ENCODE measurements at regions of chr1 and their contacts with region 1.

Region 1: DNA sequence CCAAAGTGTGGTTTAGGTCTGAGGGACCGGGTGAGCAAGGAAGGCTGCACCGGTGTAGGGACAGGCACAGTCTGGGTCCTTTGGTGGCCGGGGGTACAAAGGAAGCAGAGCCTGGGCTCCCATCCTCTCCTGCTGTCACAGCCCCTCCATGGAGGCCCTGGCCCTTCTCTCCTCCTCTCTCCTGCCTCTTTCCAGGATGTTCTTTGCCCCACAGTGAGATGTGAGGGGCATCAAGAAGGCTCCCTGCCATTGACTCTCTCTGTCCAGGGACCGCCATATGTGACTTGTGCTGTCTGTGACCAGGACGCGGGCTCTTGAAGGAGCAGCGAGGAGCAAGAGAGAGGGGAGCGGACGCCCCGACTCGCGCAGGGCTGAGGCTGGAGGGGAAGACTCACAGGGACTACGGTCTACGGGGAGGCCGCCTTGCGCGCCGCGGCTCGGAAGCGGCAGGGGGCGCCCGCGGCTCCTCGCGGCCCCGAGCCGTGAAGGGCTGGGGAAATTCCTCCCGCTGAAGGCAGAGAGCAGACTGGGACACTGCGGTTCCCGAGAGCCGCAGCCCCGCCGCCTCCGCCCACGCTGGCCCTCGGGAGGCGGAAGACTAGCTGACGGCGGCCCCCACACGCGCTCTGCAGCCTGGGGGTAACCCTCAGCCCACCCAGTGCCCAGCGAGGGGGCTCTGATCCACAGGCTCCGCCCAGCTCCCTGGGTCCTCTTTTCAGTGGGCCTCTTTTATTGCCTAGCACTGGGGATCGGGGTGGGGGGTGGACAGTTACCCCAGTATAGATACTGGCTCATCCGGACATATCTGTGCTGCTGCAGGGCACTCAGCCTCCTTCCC is 40.8 kb downstream of the MAB21L3 start:
- DNase-seq: peak; percentile 84
- ATAC-seq: peak; percentile 100
- H3K4me3 ChIP-seq: peak overlapping the region; percentile 78
- H3K27ac ChIP-seq: no peak overlapping the region
- H3K4me1 ChIP-seq: peaks cover 3% of the 10 kb centered on the region; the same call in 1 of the 2 replicates
- H3K27me3 ChIP-seq: no peaks in the 10 kb centered on the region
- CTCF ChIP-seq: peak; percentile 81

Region 2: DNA sequence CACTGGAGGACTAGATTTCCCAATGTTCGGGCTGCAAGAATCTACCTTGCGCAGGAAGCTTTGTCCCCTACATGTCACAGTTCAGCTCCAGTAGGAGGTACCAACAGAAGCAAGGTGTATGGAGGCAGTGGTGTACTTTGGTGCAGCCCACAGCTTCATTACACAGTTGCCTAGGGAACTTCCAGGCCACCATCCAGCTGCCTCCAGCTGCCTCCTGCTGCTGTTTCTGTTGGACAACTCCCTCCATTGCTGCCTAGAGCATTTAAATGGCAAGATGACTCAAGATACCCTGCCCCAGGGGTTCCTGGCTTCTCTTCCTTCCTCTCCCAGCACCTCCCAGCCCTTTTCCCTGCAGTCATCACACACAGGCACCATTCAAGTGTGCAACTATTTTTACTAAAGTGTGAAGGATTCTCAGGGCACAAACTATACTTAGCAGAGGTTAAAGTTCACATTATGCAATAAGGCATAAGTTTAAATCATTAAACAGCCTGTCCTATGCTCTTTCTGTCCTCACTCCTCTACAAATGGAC is 182.1 kb after region 1 on chr1:
- CTCF ChIA-PET with region 1: no interaction called
- POLR2A ChIA-PET with region 1: no interaction called
- intact Hi-C with region 1: loop called (anchors 10 kb)
- DNase-seq: peak; percentile 80
- ATAC-seq: peak; percentile 43
- H3K4me3 ChIP-seq: no peak overlapping the region
- H3K27ac ChIP-seq: no peak overlapping the region
- H3K4me1 ChIP-seq: peaks cover 40% of the 10 kb centered on the region
- H3K27me3 ChIP-seq: no peaks in the 10 kb centered on the region
- CTCF ChIP-seq: no peak

Region 3: DNA sequence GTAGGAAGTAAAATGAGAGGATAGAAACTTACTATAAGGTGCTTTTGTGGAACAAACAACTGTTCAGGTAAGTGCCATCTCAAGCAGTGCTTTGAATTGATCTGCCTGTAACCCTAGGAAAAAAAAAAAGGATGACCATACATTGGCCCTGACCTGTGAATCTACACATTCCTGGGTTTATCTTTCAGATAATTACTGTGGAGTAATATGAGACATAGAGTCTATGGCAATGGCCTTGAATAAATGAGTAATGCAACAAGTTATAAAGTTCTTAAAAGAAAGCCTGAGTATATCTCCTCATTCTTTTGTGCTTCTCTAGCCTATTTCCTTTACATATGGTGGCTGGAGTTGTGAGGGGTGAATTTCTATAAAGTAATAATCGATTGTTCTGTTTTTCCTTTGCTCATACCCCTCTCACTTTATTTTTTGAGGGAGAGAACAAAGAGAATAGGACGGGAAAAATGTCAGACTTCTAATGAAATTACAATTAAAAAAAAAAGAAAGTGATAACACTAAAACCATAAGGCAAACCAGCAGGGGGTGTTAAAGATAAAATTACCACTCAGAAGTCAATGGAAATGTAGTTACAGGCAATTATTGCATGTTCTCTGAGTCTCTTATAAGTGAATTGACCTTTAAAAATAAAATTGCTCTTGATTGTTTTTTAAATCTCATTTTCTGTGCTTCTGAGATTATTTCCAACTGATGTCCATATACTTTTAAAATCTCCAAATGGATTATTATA is 208.6 kb after region 1 on chr1:
- CTCF ChIA-PET with region 1: no interaction called
- POLR2A ChIA-PET with region 1: no interaction called
- intact Hi-C with region 1: loop called (anchors 5 kb)
- DNase-seq: peak; percentile 41
- ATAC-seq: no peak
- H3K4me3 ChIP-seq: no peak overlapping the region
- H3K27ac ChIP-seq: no peak overlapping the region
- H3K4me1 ChIP-seq: peaks cover 43% of the 10 kb centered on the region
- H3K27me3 ChIP-seq: no peaks in the 10 kb centered on the region
- CTCF ChIP-seq: peak; percentile 56